Mammary epithelial cell (primary cell): ENCODE measurements at regions of chr13 and their contacts with region 1.

Region 1: GRCh38 chr13:102903659-102904407 is 58.0 kb downstream of the ERCC5 start:
- DNase-seq: peak; percentile 29
- H3K4me3 ChIP-seq: no peak overlapping the region
- H3K27ac ChIP-seq: peak overlapping the region; percentile 45
- H3K4me1 ChIP-seq: peaks cover 63% of the 10 kb centered on the region
- H3K27me3 ChIP-seq: no peaks in the 10 kb centered on the region
- CTCF ChIP-seq: peak; percentile 36 to 59

Region 2: DNA sequence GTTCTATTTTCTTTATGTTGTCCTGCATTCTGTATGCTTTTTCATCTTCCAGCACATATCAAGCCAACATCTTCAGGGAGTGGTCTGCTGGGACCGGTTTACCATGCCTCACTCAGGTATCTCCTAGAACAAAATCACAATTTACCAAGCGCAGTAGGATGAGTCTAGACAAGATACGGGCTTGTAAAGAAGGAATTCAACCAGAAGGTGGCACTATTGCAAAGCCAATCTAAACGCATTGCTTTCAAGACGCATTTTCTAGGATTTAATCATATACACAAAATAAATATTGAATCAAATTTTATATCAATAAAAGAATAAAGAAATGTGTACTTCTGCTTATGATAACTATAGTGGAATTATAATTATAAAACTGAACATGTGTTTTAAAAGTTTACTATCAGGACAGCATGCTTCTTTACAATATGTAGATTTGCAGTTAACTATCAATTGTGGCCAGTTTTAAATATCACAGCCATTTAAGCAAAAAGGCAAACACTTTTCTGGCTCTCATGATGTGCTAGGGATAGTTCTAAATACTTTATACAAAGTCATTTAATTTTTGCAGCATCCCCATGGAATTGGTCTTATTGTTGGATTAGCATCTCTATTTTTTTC is 323.2 kb before region 1 on chr13:
- CTCF ChIA-PET with region 1: no interaction called
- dilution Hi-C with region 1: no loop called
- in situ Hi-C with region 1: no loop called
- intact Hi-C with region 1: loop called (anchors 5 kb)
- DNase-seq: peak; percentile 51
- H3K4me3 ChIP-seq: no peak overlapping the region
- H3K27ac ChIP-seq: no peak overlapping the region
- H3K4me1 ChIP-seq: no peaks in the 10 kb centered on the region
- H3K27me3 ChIP-seq: no peaks in the 10 kb centered on the region
- CTCF ChIP-seq: peak; percentile 74 to 76

Region 3: DNA sequence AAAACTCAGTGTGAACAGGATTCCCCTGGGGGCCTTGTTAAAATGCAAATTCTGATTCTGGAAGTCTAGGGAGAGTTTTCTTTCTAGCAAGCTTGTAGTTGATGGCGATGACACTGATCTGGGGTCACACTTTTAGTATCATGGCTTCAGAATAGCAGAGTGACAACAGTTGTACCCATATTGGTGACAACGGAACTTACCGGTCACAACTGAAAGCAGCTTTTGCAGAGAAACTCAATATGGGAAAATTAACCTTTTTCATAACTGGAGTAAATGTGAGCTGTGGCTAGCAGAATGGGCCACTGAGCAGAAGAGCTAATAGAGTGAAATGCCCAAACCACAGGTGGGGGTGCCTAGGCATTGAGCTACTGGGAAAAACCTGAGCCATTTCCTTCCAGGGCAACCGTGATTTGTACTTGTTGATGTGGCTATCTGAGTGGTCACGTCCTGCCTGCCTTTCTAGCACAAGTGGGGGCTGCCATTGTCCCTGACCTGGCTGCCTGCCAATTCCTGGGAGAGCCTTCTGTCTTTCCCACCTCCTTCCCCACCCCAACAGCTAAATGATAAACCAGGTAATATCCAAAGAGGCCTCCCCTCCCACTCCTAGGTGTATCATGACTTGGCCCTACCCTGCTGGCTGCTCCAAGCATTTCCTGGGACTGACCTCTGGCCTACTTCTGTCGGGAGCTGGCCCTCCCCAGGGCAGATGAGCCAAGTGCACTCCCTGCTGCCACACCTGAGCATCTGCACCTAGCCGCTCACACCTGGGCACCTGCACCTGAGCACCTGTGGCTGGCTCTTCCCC is 164.1 kb after region 1 on chr13:
- CTCF ChIA-PET with region 1: interaction called, 8 read pairs
- dilution Hi-C with region 1: no loop called
- in situ Hi-C with region 1: no loop called
- intact Hi-C with region 1: loop called (anchors 1 kb)
- DNase-seq: peak; percentile 14
- H3K4me3 ChIP-seq: no peak overlapping the region
- H3K27ac ChIP-seq: no peak overlapping the region
- H3K4me1 ChIP-seq: peaks cover 3% of the 10 kb centered on the region
- H3K27me3 ChIP-seq: no peaks in the 10 kb centered on the region
- CTCF ChIP-seq: peak; percentile 24 to 85

Region 4: GRCh38 chr13:103140001-103140671 is 236.3 kb after region 1 on chr13:
- CTCF ChIA-PET with region 1: no interaction called
- dilution Hi-C with region 1: no loop called
- in situ Hi-C with region 1: loop called (anchors 25 kb)
- intact Hi-C with region 1: no loop called
- DNase-seq: peak; percentile 33
- H3K4me3 ChIP-seq: no peak overlapping the region
- H3K27ac ChIP-seq: no peak overlapping the region
- H3K4me1 ChIP-seq: no peaks in the 10 kb centered on the region
- H3K27me3 ChIP-seq: no peaks in the 10 kb centered on the region
- CTCF ChIP-seq: peak; percentile 80 to 84

Region 5: GRCh38 chr13:103328899-103329298 is 425.1 kb after region 1 on chr13:
- CTCF ChIA-PET with region 1: no interaction called
- dilution Hi-C with region 1: no loop called
- in situ Hi-C with region 1: no loop called
- intact Hi-C with region 1: loop called (anchors 5 kb)
- DNase-seq: peak; percentile 1
- H3K4me3 ChIP-seq: no peak overlapping the region
- H3K27ac ChIP-seq: no peak overlapping the region
- H3K4me1 ChIP-seq: no peaks in the 10 kb centered on the region
- H3K27me3 ChIP-seq: no peaks in the 10 kb centered on the region
- CTCF ChIP-seq: peak in 1 of 2 donors; percentile 10

Region 6: DNA sequence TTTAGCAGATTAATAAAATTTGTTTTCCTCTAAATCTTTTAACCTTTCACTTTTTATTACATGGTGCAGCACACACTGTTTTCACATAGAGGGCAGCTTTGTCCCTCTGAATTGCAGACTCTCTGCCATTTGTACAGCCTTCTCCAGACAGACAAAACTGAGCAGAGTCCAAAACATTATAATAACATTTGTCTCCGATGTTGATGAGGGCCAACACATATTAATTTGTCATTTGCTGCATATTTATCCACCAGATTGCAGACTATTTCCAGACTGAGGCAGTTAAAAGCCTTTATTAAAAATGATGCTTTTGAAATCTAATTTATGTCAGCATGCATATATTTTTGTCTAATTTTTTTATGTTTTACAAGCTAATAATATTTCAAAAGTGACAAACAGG is 1414.3 kb after region 1 on chr13:
- CTCF ChIA-PET with region 1: no interaction called
- dilution Hi-C with region 1: no loop called
- in situ Hi-C with region 1: no loop called
- intact Hi-C with region 1: loop called (anchors 5 kb)
- DNase-seq: peak; percentile 34
- H3K4me3 ChIP-seq: no peak overlapping the region
- H3K27ac ChIP-seq: no peak overlapping the region
- H3K4me1 ChIP-seq: peaks cover 14% of the 10 kb centered on the region
- H3K27me3 ChIP-seq: no peaks in the 10 kb centered on the region
- CTCF ChIP-seq: peak; percentile 30 to 55